ENCODE measurements at regions of chr11 and their contacts with region 1.

Region 1: DNA sequence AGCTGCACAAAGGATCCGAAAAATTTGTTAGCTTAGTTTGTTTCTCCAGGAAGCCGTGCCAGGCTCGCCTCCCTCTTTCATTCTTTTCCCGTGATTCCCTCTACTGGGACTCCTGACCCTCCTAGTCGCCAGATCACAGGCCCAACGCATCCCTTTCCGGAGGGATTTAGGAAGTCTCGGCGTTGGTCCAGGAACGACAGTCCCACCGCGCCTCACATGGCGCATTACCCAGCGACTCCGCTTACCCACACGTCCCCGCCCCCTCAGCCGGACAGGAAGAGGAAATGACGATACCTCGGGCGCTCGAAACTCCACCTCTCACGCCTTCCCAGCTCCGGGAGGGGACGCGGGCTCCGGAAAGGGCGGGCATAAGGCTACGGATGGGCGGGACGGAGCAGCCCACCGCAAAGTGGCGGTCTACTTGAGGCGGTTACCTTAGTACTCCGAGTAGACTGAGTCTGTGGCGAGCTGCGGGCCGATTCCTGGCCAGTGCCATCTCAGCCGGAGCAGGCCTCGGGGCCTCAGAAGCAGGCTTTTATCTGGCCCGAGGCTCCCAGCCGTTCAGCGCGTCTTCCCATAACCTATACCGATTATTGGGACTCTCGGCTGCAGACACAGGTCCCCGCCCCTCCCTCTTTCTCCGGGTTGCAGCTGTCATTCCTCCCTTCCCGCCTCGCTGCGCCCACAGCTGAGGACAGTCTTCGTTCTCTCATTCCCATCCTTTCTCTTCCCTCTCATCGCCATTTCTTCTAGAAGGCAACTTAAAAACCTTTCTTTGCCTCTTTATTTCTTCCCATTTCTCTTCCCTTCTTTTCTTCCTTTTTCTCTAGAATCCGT is at the start of gene CCDC15:
- DNase-seq: peak; percentile 95 to 99 (median 98)
- H3K4me3 ChIP-seq: peak within 1 kb of the TSS; percentile 59 to 99 (median 79)
- H3K27ac ChIP-seq: peak within 1 kb of the TSS; percentile 32 to 94 (median 85)
- H3K27me3 ChIP-seq: no peaks in the 10 kb centered on the region
- CTCF ChIP-seq: peak in 36 of 56 donors; percentile 7 to 60 (median 38)
- total RNA-seq, gene CCDC15: 0.52 to 3.4 (median 1.4) TPM

Region 2: DNA sequence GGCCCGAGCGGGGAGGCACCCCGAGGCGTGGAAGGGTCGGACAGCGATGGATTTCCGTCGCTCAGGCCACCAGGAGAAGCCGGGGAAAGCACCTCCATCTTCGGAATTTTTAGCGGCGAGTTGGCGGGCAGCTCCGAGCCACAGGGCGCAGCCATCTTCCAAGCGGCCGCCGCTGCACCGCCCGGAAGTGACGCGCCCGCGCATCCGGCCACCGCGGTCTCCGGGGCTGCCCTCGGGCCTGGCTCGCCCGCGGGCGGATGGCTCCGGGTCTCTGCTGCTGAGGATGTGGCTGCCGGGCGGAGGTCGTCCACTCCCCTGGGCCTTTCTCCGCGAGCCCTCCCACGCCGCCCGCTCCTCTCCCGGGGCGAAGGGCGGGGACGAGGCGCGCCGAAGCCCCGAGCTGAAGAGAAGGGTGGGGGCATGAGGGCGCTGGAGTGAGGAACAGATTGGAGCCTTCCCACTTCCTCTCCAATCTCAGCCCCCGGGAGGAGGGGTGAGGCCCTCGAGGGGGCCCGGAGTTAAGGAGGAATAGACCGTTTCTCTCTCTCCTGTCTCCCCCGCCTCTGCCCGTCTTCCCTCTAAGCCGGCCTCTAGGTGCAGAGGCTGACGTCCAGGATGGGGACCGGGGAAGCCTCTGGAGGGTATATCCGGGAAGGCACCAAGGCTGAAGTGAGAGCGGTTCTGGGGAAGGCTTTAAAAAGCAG is 153.6 kb before region 1 on chr11 and contains the start of gene MSANTD2:
- intact Hi-C with region 1: loop called in 1 of 2 experiments (anchors 10 kb)
- DNase-seq: peak; percentile 70 to 93 (median 81)
- H3K4me3 ChIP-seq: peak within 1 kb of the TSS; percentile 67 to 97 (median 90)
- H3K27ac ChIP-seq: peak within 1 kb of the TSS; percentile 94 to 100 (median 99)
- H3K27me3 ChIP-seq: no peaks in the 10 kb centered on the region
- CTCF ChIP-seq: peak in 32 of 56 donors; percentile 4 to 56 (median 29)
- total RNA-seq, gene MSANTD2: 9.8 to 28.2 (median 17.7) TPM

Region 3: DNA sequence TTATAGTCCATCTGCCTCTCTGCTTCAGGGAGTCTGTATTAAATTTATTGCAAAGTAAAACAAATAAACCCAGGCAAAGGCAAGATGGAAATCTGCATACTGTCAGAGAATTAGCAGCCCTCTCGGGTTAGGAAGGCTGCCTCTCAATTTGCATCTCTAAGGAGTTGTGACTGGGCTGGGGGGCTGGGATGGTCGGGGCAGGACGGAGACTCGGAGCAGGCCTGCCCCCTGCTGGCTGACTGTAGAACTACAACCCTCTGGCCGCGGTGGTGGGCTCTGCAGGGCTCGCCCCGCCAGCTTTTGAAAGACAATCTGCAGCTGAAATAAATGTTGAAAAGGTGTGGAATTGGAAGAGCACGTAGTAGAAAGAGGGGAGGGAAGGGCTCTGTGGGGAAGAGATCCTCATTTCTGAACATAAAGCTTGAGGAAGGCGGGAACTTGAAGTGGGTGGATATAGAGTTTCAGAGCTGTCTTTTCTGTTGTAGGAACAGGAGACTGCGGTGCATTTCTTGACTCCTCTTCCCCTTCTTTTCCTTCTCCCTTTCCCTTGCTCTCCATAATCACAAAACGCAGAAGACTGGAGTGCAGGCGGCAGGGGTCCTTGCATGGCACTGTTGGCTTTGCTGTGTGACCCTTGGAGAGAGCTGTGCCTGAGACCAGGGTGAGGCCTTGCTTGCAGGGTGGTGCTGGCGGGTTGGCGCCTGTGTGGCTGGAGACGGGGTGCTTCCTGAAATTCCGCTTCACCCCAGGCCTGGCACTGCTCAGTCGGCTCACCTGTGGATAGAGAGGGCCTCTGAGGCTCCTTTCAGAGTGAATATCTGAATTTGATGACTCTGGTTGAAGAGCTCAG is 187.9 kb after region 1 on chr11:
- intact Hi-C with region 1: loop called in 1 of 2 experiments (anchors 10 kb)
- DNase-seq: peak in 5 of 10 donors; percentile 22 to 65 (median 43)
- H3K4me3 ChIP-seq: peak overlapping the region in 4 of 59 donors; percentile 7 to 25 (median 14)
- H3K27ac ChIP-seq: no peak overlapping the region
- H3K27me3 ChIP-seq: peaks cover 0 to 11% (median 0%) of the 10 kb centered on the region in 45 donors
- CTCF ChIP-seq: peak; percentile 83 to 99 (median 95)

Region 4: DNA sequence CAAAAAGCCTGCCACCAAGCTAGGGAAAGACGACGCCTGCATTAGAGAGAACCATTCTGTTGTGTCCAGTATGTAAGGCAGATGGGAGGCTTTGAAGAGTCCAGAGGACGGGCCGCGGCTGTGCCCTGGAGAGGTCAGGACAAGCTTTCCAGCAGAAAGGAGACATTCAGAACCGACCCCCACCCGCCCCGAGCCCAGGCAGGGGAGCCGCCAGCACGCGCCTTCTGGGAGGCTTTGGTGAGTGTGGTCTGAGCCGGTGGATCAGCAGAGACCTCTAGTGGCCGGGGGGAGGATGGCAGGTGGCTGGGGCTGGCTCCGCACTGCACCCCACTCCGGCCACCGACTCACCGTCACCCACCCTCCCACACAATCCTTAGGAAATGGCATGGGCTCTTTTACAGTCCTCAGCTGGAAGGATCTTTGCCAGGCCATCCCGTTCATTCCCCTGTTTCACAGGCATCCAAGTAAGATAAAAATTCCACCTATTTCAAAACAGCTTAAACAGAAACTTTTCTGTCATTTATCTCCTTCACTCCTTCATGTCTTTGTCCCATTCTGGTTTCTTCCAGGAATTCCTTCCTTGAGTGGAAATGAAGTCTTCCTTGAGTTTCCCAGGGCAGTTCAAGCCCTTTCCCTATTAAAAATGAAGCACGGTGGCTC is 450.9 kb after region 1 on chr11:
- intact Hi-C with region 1: loop called in 1 of 2 experiments (anchors 10 kb)
- DNase-seq: peak; percentile 72 to 84 (median 77)
- H3K4me3 ChIP-seq: peak overlapping the region in 21 of 59 donors; percentile 5 to 35 (median 17)
- H3K27ac ChIP-seq: peak overlapping the region in 56 of 59 donors; percentile 12 to 87 (median 70)
- H3K27me3 ChIP-seq: no peaks in the 10 kb centered on the region
- CTCF ChIP-seq: peak; percentile 64 to 98 (median 91)